ENCODE measurements at regions of chr19 and their contacts with region 1.

Region 1: GRCh38 chr19:42881229-42881628 is 1.7 kb upstream of the PSG1 start:
- DNase-seq: no peak
- ATAC-seq: no peak
- H3K4me3 Mint-ChIP-seq: no peak overlapping the region
- H3K27ac Mint-ChIP-seq: no peak overlapping the region
- H3K4me1 Mint-ChIP-seq: no peaks in the 10 kb centered on the region
- H3K27me3 Mint-ChIP-seq: peaks cover 33% of the 10 kb centered on the region

Region 2: GRCh38 chr19:42662712-42663111 is 218.5 kb before region 1 on chr19:
- CTCF ChIA-PET with region 1: no interaction called
- POLR2A ChIA-PET with region 1: no interaction called
- intact Hi-C with region 1: no loop called
- DNase-seq: no peak
- ATAC-seq: no peak
- H3K4me3 Mint-ChIP-seq: no peak overlapping the region
- H3K27ac Mint-ChIP-seq: no peak overlapping the region
- H3K4me1 Mint-ChIP-seq: no peaks in the 10 kb centered on the region
- H3K27me3 Mint-ChIP-seq: peaks cover 25% of the 10 kb centered on the region

Region 3: GRCh38 chr19:42683917-42684513 is 197.2 kb before region 1 on chr19:
- CTCF ChIA-PET with region 1: no interaction called
- POLR2A ChIA-PET with region 1: no interaction called
- intact Hi-C with region 1: loop called in 1 of 2 experiments (anchors 10 kb)
- DNase-seq: peak; percentile 45
- ATAC-seq: no peak
- H3K4me3 Mint-ChIP-seq: no peak overlapping the region
- H3K27ac Mint-ChIP-seq: no peak overlapping the region
- H3K4me1 Mint-ChIP-seq: no peaks in the 10 kb centered on the region
- H3K27me3 Mint-ChIP-seq: peaks cover 6% of the 10 kb centered on the region

Region 4: DNA sequence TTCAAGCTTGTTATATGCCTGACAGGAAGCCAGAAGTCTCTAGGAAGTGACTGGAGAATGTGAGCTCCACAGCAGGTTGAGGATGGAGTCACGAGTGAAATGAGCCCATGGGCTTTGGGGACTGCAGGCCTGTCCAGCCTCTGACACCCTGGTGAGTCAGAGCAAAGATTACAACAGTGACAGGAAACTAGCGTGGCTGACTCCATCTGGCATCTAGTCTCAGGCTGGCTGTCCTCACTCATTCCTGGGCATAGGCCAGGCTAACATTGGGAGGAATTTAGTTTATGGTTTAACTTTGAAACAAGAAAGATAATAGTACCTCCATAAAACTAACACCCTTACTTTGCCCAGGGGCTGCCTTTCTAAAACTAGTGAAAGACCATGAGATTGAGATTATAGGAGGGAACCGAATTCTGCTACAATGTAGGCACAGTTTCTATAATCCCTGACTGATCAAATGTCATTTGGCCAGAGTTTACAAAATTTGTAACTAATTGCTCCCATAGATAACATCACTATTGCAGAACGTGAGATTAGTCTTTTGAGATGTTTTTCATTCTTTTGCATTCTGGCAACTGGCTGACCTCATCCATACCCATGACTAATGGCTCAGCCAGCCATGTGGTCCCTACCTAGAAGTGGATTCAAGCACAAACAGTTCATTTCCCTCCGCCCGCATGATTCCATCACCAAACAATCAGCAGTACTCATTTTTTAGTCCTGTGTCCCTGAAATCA is 30.1 kb before region 1 on chr19:
- CTCF ChIA-PET with region 1: no interaction called
- POLR2A ChIA-PET with region 1: no interaction called
- intact Hi-C with region 1: no loop called
- DNase-seq: no peak
- ATAC-seq: no peak
- H3K4me3 Mint-ChIP-seq: no peak overlapping the region
- H3K27ac Mint-ChIP-seq: no peak overlapping the region
- H3K4me1 Mint-ChIP-seq: no peaks in the 10 kb centered on the region
- H3K27me3 Mint-ChIP-seq: peaks cover 7% of the 10 kb centered on the region